ENCODE measurements at regions of chr2 and their contacts with region 1.

Region 1: GRCh38 chr2:71935262-71935848 is 212.3 kb downstream of the CYP26B1 start:
- DNase-seq: no peak
- ATAC-seq: no peak
- H3K4me3 Mint-ChIP-seq: no peak overlapping the region
- H3K27ac Mint-ChIP-seq: no peak overlapping the region
- H3K4me1 Mint-ChIP-seq: no peaks in the 10 kb centered on the region
- H3K27me3 Mint-ChIP-seq: peaks cover 3% of the 10 kb centered on the region

Region 2: DNA sequence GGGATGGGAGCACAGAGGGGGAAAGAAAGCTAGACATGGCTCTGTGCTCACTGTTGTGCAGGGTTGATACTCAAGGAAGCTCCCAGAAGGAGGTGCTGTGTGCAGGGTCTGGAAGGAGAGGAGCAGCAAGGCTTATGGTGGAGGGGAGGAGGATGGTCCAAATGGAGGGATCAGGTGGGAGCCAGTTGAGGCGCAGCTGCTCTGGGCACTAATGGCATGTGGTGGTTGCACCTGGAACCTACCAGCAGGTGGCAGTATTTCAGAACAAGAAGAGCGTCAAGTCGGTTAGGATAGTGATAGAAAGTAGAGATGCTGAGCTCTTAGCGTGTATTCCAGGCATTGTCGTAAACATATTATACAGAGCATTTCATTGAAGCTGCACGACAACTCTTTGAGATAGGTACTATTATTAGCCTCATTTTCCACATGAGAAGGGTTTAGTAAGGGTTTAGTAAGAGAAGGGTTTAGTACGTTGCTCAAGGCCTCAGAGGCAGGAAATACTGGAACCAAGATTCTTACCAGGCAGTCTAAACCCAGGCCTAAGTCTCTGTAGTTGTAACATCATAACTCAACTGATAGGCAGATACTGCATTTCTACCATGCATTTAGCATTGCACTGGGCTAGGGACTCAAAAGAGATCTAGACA is 11.3 kb before region 1 on chr2:
- CTCF ChIA-PET with region 1: interaction called, 18 read pairs
- POLR2A ChIA-PET with region 1: no interaction called
- intact Hi-C with region 1: no loop called
- DNase-seq: peak; percentile 77
- ATAC-seq: peak; percentile 63
- H3K4me3 Mint-ChIP-seq: no peak overlapping the region
- H3K27ac Mint-ChIP-seq: no peak overlapping the region
- H3K4me1 Mint-ChIP-seq: no peaks in the 10 kb centered on the region
- H3K27me3 Mint-ChIP-seq: no peaks in the 10 kb centered on the region

Region 3: GRCh38 chr2:71976685-71977084 is 41.3 kb after region 1 on chr2:
- CTCF ChIA-PET with region 1: no interaction called
- POLR2A ChIA-PET with region 1: no interaction called
- intact Hi-C with region 1: no loop called
- DNase-seq: no peak
- ATAC-seq: no peak
- H3K4me3 Mint-ChIP-seq: no peak overlapping the region
- H3K27ac Mint-ChIP-seq: no peak overlapping the region
- H3K4me1 Mint-ChIP-seq: no peaks in the 10 kb centered on the region
- H3K27me3 Mint-ChIP-seq: peaks cover 17% of the 10 kb centered on the region

Measured in activated CD4-positive, alpha-beta T cell treated with anti-CD3 and anti-CD28 coated beads for 36 hours (primary cell).